AG04449 (cell line): ENCODE measurements at regions of chr11 and their contacts with region 1.

Region 1: GRCh38 chr11:111283945-111284481 is 14.3 kb upstream of the POU2AF3 start:
- DNase-seq: no peak
- H3K4me3 ChIP-seq: no peak overlapping the region
- CTCF ChIP-seq: no peak

Region 2: DNA sequence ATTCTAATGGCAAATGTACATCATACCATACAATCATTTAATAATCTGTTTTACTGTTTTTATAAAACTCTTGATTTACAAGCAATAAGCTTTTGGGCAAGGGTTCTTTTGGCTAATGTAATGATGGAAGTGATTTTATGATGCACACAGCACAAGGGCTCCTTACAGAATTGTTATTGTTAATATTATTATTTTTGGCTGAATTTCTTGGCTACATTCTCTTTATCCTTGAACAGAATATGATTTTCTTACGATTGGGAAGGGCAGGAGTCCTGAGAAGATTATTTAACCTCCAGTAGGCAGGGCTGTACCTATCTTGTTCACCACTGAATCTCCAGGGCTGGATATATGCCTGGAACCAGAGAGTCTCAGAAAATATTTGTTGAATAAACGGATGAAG is 501.4 kb before region 1 on chr11:
- CTCF ChIA-PET with region 1: no interaction called
- POLR2A ChIA-PET with region 1: no interaction called
- DNase-seq: no peak
- H3K4me3 ChIP-seq: no peak overlapping the region
- CTCF ChIP-seq: no peak

Region 3: GRCh38 chr11:111272420-111272819 is 11.6 kb before region 1 on chr11:
- CTCF ChIA-PET with region 1: interaction called, 28 read pairs
- POLR2A ChIA-PET with region 1: no interaction called
- DNase-seq: no peak
- H3K4me3 ChIP-seq: no peak overlapping the region
- CTCF ChIP-seq: no peak

Region 4: GRCh38 chr11:111296196-111296595 is 12.2 kb after region 1 on chr11:
- CTCF ChIA-PET with region 1: interaction called, 15 read pairs
- POLR2A ChIA-PET with region 1: no interaction called
- DNase-seq: no peak
- H3K4me3 ChIP-seq: no peak overlapping the region
- CTCF ChIP-seq: no peak

Region 5: DNA sequence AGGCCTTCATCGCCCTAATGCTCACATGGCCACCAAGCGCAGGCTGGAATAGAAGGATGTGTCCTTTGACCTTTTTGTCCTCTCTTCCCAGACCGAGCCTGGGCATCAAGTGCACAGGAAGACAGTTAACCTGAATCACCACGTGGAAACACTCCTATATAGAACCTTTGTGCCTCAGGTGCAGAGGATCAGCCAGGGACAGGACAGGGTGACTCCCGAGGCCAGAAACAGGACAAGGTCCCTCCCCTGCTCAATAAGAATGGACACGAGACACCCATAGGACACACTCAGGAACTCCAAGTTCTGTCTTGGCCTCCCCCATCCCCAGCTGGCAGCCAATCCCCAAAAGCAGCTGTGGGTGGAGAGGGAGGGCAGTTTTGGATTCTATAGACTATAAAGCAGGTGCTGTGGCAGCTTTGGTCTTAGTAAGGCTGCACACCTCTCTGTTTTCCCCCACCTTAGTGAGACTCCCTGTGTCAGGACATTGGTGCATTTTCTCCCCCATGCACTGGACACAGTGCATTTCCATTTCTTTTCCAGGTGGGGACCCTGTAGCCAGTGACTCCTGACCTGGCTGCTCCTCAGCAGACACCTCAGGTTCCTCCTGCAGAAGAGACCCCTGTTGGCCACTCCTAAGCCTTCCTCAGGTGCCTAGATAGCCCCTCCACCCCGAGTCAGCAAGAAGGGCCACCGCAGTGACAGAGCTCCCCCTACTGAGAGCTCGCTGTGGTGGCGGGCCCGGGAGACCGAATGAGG is 138.7 kb after region 1 on chr11:
- CTCF ChIA-PET with region 1: interaction called, 21 read pairs
- POLR2A ChIA-PET with region 1: no interaction called
- DNase-seq: no peak
- H3K4me3 ChIP-seq: no peak overlapping the region
- CTCF ChIP-seq: peak; percentile 45

Region 6: GRCh38 chr11:111429066-111429506 is 145.1 kb after region 1 on chr11:
- CTCF ChIA-PET with region 1: interaction called, 25 read pairs
- POLR2A ChIA-PET with region 1: no interaction called
- DNase-seq: no peak
- H3K4me3 ChIP-seq: no peak overlapping the region
- CTCF ChIP-seq: peak; percentile 48

Region 7: DNA sequence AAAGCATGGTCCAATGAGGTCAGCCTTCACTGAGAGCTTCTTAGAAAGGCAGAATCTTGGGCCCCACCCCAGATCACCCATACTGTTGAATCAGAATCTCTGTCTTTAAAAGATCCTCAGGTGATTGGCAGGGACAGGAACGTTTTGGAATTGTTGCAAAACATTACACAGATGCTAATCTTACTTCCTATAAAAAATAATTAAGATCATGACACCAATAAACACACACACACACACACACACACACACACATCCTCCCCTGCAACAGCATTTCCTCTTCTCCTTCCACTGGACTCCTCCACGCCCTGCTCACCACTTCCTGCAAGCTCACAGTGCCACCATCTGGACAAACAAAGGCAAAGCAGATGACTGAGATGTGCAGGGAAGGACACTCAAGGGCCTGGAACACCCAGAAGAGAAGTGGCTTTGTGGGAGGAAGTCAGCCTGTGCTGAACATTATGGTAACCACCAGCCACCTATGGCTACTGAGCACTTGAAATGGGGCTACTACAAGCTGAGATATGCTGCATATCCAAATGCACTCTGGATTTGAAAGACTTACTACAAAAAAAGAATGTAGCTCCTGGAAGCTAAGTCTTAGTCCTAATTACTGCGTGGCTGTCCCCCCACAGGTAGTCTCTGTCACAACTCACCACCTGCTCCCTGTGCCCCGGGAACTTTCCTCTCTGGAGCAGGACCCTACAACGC is 162.5 kb after region 1 on chr11:
- CTCF ChIA-PET with region 1: interaction called, 188 read pairs
- POLR2A ChIA-PET with region 1: no interaction called
- DNase-seq: peak; percentile 54
- H3K4me3 ChIP-seq: no peak overlapping the region
- CTCF ChIP-seq: peak; percentile 96

Region 8: DNA sequence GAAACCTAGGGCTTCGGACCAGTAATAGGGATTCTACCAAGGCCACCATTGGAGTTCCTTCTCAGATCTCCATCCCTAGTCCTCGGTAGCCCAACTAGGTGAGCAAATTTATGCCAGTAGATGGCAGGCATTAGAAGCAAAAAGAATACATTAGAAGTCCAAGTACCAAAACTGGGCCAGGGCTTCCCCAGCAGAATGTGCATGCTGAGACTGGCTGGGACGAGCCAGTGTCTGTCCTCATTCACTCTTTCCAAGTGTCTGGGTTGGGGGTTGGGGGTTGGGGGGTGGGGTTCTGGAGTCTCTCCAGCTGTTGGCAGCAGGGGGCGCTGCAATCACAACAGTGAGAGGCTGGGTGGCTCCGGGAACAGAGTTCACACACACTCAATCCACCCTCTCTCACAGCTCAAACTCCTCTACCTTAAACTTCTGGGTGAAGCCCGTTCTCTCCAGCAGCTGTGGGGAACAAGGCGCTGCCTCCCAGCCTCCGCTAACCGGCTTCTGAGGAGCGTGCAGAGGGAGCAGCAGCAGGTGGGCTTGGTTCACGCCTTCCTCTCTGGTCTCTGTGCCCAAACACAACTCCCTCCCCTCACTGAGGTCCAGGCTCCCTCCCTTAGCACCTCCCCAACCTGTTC is 170.7 kb after region 1 on chr11:
- CTCF ChIA-PET with region 1: interaction called, 17 read pairs
- POLR2A ChIA-PET with region 1: no interaction called
- DNase-seq: peak; percentile 5
- H3K4me3 ChIP-seq: no peak overlapping the region
- CTCF ChIP-seq: peak; percentile 69